Panc1 (cell line): ENCODE measurements at regions of chr6 and their contacts with region 1.

Region 1: GRCh38 chr6:151219192-151219591 is 20.6 kb upstream of the AKAP12 start:
- DNase-seq: no peak
- ATAC-seq: no peak
- H3K4me3 ChIP-seq: no peak overlapping the region
- H3K27ac ChIP-seq: no peak overlapping the region
- H3K4me1 ChIP-seq: no peaks in the 10 kb centered on the region
- H3K27me3 ChIP-seq: no peaks in the 10 kb centered on the region
- CTCF ChIP-seq: no peak

Region 2: DNA sequence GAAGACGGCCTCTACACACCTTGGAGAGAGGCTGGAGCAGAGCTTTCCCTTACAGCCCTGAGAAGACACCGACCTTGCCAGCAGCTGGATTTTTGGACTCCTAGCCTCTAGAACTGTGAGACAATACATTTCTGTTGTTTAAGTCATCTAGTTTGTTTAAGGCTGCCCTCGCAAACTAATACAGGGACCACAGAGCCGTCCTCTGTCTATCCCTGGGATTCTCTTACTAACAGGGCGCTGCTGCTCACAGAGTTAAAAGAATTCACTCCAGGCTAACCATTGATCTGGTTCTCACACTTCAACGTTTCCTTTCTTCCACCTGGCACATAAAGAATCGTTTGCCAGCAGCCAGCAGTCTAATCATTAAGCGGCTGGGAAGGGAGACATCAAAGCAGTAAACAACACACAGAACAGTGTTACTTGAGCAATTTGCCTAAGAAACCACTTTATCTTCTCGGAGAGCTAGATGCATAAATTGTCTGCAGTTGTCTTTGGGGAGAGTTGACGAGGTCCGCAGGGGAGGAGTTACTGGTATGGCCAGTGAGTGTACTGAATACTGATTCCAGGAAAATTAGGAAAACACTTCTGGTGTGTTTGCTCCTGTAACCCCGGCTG is 82.9 kb before region 1 on chr6:
- CTCF ChIA-PET with region 1: interaction called, 13 read pairs
- POLR2A ChIA-PET with region 1: no interaction called
- in situ Hi-C with region 1: no loop called
- intact Hi-C with region 1: no loop called
- DNase-seq: no peak
- ATAC-seq: peak; percentile 67
- H3K4me3 ChIP-seq: no peak overlapping the region
- H3K27ac ChIP-seq: no peak overlapping the region
- H3K4me1 ChIP-seq: peaks cover 3% of the 10 kb centered on the region; the same call in 1 of the 2 replicates
- H3K27me3 ChIP-seq: no peaks in the 10 kb centered on the region
- CTCF ChIP-seq: no peak